ENCODE measurements at regions of chr10 and their contacts with region 1.

Region 1: DNA sequence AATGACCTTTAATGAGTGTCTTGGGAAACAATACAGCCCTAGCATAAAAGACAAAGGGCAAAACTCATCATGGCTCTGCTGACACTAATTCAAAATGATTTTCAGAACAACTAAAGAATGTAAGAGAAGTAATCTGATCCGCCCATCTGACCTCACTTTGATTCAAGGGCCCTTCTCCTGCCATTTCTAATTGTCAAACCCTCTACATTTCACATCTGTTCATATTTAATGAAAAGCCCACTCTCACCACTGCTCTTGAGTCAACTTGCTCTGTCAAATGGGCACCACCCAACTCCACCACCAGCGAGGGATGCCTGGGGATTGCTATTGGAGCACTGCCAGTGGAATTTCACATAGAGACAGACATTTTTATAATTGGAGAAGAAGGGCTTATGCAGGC is 639.2 kb downstream of the KCNMA1 start:
- DNase-seq: no peak
- ATAC-seq: no peak
- H3K4me3 ChIP-seq: no peak overlapping the region
- H3K27ac ChIP-seq: no peak overlapping the region
- H3K4me1 ChIP-seq: no peaks in the 10 kb centered on the region
- H3K27me3 ChIP-seq: peaks cover 0 to 4% (median 0%) of the 10 kb centered on the region in 9 donors
- CTCF ChIP-seq: no peak
- POLR2A ChIP-seq: no peak

Region 2: DNA sequence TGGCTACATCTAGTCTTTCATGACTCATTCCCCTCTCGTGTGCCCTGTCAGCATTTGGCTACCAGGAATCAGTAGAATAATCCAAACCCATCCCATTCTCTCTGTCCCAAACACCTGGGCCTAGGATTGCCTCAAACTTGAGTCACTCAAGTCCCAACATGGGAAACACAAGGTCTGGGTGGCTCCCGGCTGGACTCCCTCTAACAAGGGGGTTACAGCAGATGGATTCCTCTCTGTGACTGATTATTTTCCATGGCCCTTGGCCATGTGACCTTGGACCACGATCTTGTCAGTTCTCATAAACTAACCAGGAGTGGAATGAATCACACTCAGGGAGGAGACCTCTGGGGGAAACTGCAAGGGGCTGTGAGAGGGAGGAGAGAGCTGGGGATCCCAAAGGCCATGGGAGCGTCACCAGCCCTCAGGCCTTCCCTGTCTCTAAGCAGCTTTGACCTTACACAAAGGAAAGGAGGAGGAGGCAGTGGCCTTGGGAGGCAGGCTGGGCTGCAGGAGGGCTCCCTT is 106.1 kb after region 1 on chr10:
- intact Hi-C with region 1: loop called in 1 of 10 experiments (anchors 10 kb)
- DNase-seq: peak; percentile 50 to 79 (median 62)
- ATAC-seq: peak; percentile 59 to 92 (median 88)
- H3K4me3 ChIP-seq: no peak overlapping the region
- H3K27ac ChIP-seq: peak overlapping the region in 7 of 12 donors; percentile 21 to 54 (median 52)
- H3K4me1 ChIP-seq: peaks cover 0 to 28% (median 0%) of the 10 kb centered on the region in 12 donors
- H3K27me3 ChIP-seq: peaks cover 0 to 7% (median 0%) of the 10 kb centered on the region in 9 donors
- CTCF ChIP-seq: no peak
- POLR2A ChIP-seq: no peak

Region 3: DNA sequence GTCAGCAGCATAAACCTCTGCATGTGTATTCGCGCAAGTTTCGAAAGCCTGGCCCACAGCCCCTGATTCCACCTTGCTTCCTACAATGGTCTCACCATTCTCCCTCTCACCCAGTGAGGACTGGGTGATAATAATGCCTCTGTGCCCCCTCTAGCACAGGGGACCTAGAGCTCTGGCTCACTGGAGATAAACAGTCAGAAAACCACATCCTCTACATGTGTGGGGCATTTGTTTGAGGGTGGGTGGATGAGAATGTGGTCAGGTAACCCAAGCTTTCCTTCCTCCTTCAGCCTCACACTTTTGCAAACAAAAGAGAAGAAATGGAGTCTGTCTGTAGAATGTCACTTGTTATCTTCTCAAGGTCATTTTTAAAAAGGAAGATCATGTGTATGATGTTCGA is 265.7 kb after region 1 on chr10:
- intact Hi-C with region 1: no loop called
- DNase-seq: no peak
- ATAC-seq: no peak
- H3K4me3 ChIP-seq: no peak overlapping the region
- H3K27ac ChIP-seq: no peak overlapping the region
- H3K4me1 ChIP-seq: peaks cover 0 to 9% (median 0%) of the 10 kb centered on the region in 12 donors
- H3K27me3 ChIP-seq: no peaks in the 10 kb centered on the region
- CTCF ChIP-seq: no peak
- POLR2A ChIP-seq: no peak

Measured in heart left ventricle (tissue), 16 donors.